ENCODE measurements at regions of chrX and their contacts with region 1.

Region 1: GRCh38 chrX:51860679-51861078 is 32.7 kb upstream of the MAGED1 start:
- DNase-seq: peak; percentile 60 to 72
- H3K4me3 ChIP-seq: no peak overlapping the region
- H3K4me1 ChIP-seq: no peaks in the 10 kb centered on the region
- H3K27me3 ChIP-seq: 0 out of 2 replicates have a peak, but pooled peaks cover 3% of the 10 kb centered on the region

Region 2: DNA sequence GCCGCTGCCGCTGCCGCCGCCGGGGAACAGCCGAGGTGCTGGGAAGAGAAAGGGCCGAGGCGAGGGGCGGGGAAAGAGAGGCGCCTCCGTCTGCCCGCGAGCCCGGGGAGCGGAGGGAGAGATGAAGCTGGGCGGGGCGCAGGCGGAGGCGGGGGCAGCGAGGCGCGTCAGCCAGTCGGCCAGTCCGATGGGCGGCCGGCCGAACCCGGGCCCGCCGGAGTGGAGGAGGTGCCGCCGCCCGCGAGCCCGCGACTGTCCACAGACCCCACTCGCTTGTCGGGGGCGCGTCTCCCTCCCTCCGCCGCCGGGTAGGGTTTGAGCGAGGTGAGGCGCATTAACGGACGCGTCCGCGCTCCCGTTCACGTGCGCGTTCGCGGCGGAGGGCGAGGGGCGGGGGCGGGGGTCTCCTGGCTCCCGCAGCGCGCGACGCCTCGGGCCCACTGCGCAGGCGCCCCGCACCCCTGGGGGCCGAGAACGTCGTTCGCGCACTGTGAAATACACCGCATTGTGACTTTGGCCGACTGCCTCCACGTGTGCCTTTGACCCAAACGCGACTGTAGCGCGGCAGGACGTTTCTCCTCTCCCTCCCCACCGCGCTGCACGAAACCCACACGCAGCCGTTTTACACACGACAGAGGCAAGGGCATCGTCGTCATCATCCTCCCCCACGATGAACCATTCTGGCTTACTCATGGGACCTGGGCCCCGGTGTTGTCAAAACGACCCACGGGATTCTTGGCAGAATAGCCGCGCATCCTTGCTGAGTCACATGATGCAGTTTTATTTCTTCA is 364.0 kb before region 1 on chrX and contains the start of gene NUDT11:
- in situ Hi-C with region 1: loop called (anchors 25 kb)
- DNase-seq: peak; percentile 79 to 94
- H3K4me3 ChIP-seq: peak within 1 kb of the TSS; percentile 51
- H3K4me1 ChIP-seq: peaks cover 15% of the 10 kb centered on the region
- H3K27me3 ChIP-seq: no peaks in the 10 kb centered on the region

Region 3: GRCh38 chrX:51608126-51608525 is 252.6 kb before region 1 on chrX:
- in situ Hi-C with region 1: no loop called
- DNase-seq: no peak
- H3K4me3 ChIP-seq: no peak overlapping the region
- H3K4me1 ChIP-seq: no peaks in the 10 kb centered on the region
- H3K27me3 ChIP-seq: peaks cover 2% of the 10 kb centered on the region

Region 4: GRCh38 chrX:51641421-51642021 is 219.2 kb before region 1 on chrX:
- in situ Hi-C with region 1: loop called (anchors 25 kb)
- DNase-seq: peak; percentile 62
- H3K4me3 ChIP-seq: no peak overlapping the region
- H3K4me1 ChIP-seq: no peaks in the 10 kb centered on the region
- H3K27me3 ChIP-seq: 0 out of 2 replicates have a peak, but pooled peaks cover 2% of the 10 kb centered on the region

Region 5: GRCh38 chrX:51759055-51759839 is 101.4 kb before region 1 on chrX:
- in situ Hi-C with region 1: no loop called
- DNase-seq: no peak
- H3K4me3 ChIP-seq: no peak overlapping the region
- H3K4me1 ChIP-seq: no peaks in the 10 kb centered on the region
- H3K27me3 ChIP-seq: peaks cover 5% of the 10 kb centered on the region; the same call in 1 of the 2 replicates

Measured in HAP-1 (cell line).